Caco-2 (cell line): ENCODE measurements at regions of chr2 and their contacts with region 1.

Region 1: GRCh38 chr2:121974897-121975661 is 219.6 kb downstream of the TSN start:
- DNase-seq: peak; percentile 77 to 82
- H3K4me3 ChIP-seq: peak overlapping the region; percentile 11; the same call in 1 of the 2 replicates
- H3K4me3 Mint-ChIP-seq: peak overlapping the region; percentile 40
- H3K27ac Mint-ChIP-seq: peak overlapping the region; percentile 73
- H3K4me1 ChIP-seq: peaks cover 9% of the 10 kb centered on the region
- H3K4me1 Mint-ChIP-seq: peaks cover 10% of the 10 kb centered on the region
- H3K27me3 ChIP-seq: no peaks in the 10 kb centered on the region
- H3K27me3 Mint-ChIP-seq: peaks cover 8% of the 10 kb centered on the region
- CTCF ChIP-seq: peak; percentile 57 to 80

Region 2: DNA sequence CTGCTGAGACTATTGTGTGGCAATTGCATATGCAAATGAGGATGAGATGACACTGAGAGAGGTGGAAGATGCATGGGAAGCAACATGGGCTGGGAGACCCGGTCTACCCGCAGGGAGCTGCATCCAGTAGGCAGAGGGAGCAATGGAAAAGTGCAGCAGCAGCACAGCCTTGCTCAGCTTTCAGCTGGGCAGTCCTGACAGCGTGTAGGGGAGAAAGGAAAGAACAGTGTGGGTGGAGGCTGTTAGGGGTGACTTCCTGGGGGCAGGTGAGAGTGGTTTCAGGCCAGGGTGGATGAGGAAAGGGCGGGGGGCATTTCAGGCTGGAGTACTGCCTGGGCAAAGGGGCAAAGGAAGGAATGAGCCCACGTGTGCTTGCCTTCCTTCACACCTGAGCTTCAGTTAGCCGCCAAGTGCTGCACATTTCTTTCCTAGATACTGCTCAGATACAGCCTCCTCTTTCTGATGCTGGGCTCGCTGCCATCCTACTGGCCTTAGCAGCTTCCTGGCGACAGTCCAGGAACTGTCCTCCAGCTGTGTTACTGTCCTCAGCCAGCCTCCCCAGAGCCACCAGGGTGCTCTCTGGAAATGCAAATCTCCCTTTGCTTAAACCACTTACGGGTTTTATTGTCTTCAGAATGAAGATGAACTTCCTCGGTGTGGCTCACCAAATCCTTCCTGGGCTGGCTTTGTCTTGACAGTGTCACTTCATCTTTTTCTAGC is 56.6 kb after region 1 on chr2:
- CTCF ChIA-PET with region 1: no interaction called
- POLR2A ChIA-PET with region 1: no interaction called
- intact Hi-C with region 1: no loop called
- DNase-seq: no peak
- H3K4me3 ChIP-seq: no peak overlapping the region
- H3K4me3 Mint-ChIP-seq: no peak overlapping the region
- H3K27ac Mint-ChIP-seq: no peak overlapping the region
- H3K4me1 ChIP-seq: peaks cover 16% of the 10 kb centered on the region
- H3K4me1 Mint-ChIP-seq: peaks cover 6% of the 10 kb centered on the region
- H3K27me3 ChIP-seq: no peaks in the 10 kb centered on the region
- H3K27me3 Mint-ChIP-seq: no peaks in the 10 kb centered on the region
- CTCF ChIP-seq: no peak

Region 3: GRCh38 chr2:122055521-122055931 is 80.4 kb after region 1 on chr2:
- CTCF ChIA-PET with region 1: no interaction called
- POLR2A ChIA-PET with region 1: no interaction called
- intact Hi-C with region 1: loop called (anchors 5 kb)
- DNase-seq: no peak
- H3K4me3 ChIP-seq: no peak overlapping the region
- H3K4me3 Mint-ChIP-seq: no peak overlapping the region
- H3K27ac Mint-ChIP-seq: no peak overlapping the region
- H3K4me1 ChIP-seq: peaks cover 34% of the 10 kb centered on the region
- H3K4me1 Mint-ChIP-seq: peaks cover 23% of the 10 kb centered on the region
- H3K27me3 ChIP-seq: no peaks in the 10 kb centered on the region
- H3K27me3 Mint-ChIP-seq: no peaks in the 10 kb centered on the region
- CTCF ChIP-seq: no peak

Region 4: DNA sequence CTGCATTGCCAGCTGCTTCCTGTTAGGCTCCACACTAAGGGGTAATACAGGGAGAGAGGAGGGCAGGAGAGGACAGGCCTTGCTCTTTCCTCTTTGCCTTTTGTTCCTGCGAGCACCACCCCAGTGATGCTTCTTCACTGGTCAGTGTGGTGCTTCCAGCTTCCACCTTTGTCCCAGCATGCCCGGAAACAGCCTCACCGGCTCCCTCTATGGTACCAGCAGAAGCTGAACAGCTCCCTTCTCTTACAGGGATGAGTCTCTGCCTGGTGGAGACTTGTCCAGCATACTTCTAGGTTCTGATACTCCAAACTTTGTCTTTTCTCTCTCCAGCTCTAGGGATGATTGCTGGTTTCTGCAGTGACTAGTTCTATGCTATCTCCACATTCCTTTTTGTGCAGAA is 193.7 kb after region 1 on chr2:
- CTCF ChIA-PET with region 1: interaction called, 5 read pairs
- POLR2A ChIA-PET with region 1: no interaction called
- intact Hi-C with region 1: loop called (anchors 1 kb)
- DNase-seq: peak; percentile 24 to 40
- H3K4me3 ChIP-seq: no peak overlapping the region
- H3K4me3 Mint-ChIP-seq: no peak overlapping the region
- H3K27ac Mint-ChIP-seq: no peak overlapping the region
- H3K4me1 ChIP-seq: no peaks in the 10 kb centered on the region
- H3K4me1 Mint-ChIP-seq: no peaks in the 10 kb centered on the region
- H3K27me3 ChIP-seq: peaks cover 1% of the 10 kb centered on the region; the same call in 1 of the 2 replicates
- H3K27me3 Mint-ChIP-seq: peaks cover 6% of the 10 kb centered on the region
- CTCF ChIP-seq: no peak

Region 5: DNA sequence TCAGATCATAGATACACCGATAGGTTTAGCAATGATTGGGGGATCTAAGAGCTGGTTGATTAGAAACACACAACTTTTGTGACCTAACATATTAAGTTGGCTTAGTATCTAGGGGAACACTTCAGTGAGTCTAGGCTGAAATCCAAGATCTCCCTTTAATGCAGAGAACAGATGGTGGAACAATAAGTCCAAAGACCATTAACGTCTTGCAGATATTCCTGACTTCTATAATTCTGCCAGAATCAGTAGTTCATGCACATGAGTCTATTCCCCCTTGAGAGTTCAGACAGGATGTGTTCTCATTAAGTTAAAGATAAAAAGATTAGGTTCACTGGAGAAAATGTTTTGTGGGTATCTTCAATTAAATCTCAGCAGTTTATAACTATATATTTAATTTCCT is 286.8 kb after region 1 on chr2:
- CTCF ChIA-PET with region 1: no interaction called
- POLR2A ChIA-PET with region 1: no interaction called
- intact Hi-C with region 1: loop called (anchors 5 kb)
- DNase-seq: no peak
- H3K4me3 ChIP-seq: no peak overlapping the region
- H3K4me3 Mint-ChIP-seq: no peak overlapping the region
- H3K27ac Mint-ChIP-seq: no peak overlapping the region
- H3K4me1 ChIP-seq: no peaks in the 10 kb centered on the region
- H3K4me1 Mint-ChIP-seq: no peaks in the 10 kb centered on the region
- H3K27me3 ChIP-seq: no peaks in the 10 kb centered on the region
- H3K27me3 Mint-ChIP-seq: peaks cover 6% of the 10 kb centered on the region
- CTCF ChIP-seq: no peak

Region 6: GRCh38 chr2:122315306-122315705 is 340.2 kb after region 1 on chr2:
- CTCF ChIA-PET with region 1: no interaction called
- POLR2A ChIA-PET with region 1: no interaction called
- intact Hi-C with region 1: no loop called
- DNase-seq: no peak
- H3K4me3 ChIP-seq: no peak overlapping the region
- H3K4me3 Mint-ChIP-seq: no peak overlapping the region
- H3K27ac Mint-ChIP-seq: no peak overlapping the region
- H3K4me1 ChIP-seq: no peaks in the 10 kb centered on the region
- H3K4me1 Mint-ChIP-seq: no peaks in the 10 kb centered on the region
- H3K27me3 ChIP-seq: no peaks in the 10 kb centered on the region
- H3K27me3 Mint-ChIP-seq: peaks cover 4% of the 10 kb centered on the region
- CTCF ChIP-seq: no peak

Region 7: DNA sequence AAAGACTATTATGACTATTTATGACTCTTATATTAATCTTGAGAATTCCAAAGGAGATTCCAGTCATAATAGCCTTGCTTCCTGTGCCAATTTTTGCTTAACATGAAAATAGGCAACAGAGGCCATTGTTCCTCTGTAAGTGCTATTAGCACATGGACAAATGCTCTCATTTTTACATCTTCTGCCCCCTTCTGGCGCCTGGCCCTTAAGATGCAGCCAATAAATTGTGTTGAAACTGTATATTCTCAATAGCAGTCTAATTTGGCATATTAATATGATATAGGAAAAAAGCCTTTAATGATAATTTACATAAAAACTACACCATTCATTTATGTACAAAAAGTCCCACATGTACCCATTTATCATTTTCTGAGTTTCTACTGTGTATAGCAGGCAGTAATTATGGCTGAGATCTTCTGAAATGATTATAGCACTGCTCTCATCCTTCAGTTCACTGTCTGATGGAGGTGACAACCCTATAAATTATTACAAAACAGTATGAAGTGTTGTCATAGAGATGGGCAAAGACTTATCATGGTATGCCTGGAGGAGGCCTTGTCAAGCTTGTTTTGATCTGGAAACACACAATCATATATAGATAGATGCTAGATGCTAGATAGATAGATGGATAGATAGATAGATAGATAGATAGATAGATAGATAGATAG is 393.6 kb after region 1 on chr2:
- CTCF ChIA-PET with region 1: no interaction called
- POLR2A ChIA-PET with region 1: no interaction called
- intact Hi-C with region 1: loop called (anchors 1 kb)
- DNase-seq: no peak
- H3K4me3 ChIP-seq: no peak overlapping the region
- H3K4me3 Mint-ChIP-seq: no peak overlapping the region
- H3K27ac Mint-ChIP-seq: no peak overlapping the region
- H3K4me1 ChIP-seq: no peaks in the 10 kb centered on the region
- H3K4me1 Mint-ChIP-seq: no peaks in the 10 kb centered on the region
- H3K27me3 ChIP-seq: no peaks in the 10 kb centered on the region
- H3K27me3 Mint-ChIP-seq: peaks cover 2% of the 10 kb centered on the region
- CTCF ChIP-seq: no peak

Region 8: GRCh38 chr2:122748552-122749011 is 773.5 kb after region 1 on chr2:
- CTCF ChIA-PET with region 1: no interaction called
- POLR2A ChIA-PET with region 1: no interaction called
- intact Hi-C with region 1: loop called (anchors 1 kb)
- DNase-seq: peak in 1 of 2 experiments; percentile 11
- H3K4me3 ChIP-seq: no peak overlapping the region
- H3K4me3 Mint-ChIP-seq: no peak overlapping the region
- H3K27ac Mint-ChIP-seq: no peak overlapping the region
- H3K4me1 ChIP-seq: no peaks in the 10 kb centered on the region; the same call in 1 of the 2 replicates
- H3K4me1 Mint-ChIP-seq: peaks cover 11% of the 10 kb centered on the region
- H3K27me3 ChIP-seq: no peaks in the 10 kb centered on the region
- H3K27me3 Mint-ChIP-seq: no peaks in the 10 kb centered on the region
- CTCF ChIP-seq: no peak